ENCODE measurements at regions of chr5 and their contacts with region 1.

Region 1: DNA sequence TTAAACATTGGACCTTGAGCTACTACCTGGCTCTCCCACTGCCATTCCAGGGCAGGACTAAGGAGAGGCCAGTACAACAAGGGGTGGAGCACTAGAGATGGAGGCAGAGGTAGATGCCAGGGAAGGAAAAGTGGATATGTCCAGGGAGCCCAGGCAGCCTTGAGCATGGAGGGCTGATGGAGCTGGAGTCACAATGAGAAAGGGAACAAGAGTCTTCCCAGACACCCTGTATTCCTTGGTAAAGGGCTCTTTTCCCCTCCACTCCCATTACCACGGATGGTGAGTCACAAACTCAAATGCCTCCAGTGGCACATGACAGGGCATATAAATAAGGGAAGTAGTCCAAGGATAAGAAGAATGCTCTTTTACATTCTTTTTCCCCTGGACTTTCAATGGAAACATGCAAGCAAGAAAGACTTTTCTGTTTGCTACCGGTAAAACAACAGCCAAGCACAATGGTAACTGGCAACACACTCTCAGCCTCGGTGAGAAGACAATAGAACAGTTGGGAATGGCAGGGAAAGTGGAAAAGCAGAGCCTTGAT is 16.7 kb downstream of the ERAP1 start:
- DNase-seq: no peak
- CTCF ChIP-seq: no peak

Region 2: DNA sequence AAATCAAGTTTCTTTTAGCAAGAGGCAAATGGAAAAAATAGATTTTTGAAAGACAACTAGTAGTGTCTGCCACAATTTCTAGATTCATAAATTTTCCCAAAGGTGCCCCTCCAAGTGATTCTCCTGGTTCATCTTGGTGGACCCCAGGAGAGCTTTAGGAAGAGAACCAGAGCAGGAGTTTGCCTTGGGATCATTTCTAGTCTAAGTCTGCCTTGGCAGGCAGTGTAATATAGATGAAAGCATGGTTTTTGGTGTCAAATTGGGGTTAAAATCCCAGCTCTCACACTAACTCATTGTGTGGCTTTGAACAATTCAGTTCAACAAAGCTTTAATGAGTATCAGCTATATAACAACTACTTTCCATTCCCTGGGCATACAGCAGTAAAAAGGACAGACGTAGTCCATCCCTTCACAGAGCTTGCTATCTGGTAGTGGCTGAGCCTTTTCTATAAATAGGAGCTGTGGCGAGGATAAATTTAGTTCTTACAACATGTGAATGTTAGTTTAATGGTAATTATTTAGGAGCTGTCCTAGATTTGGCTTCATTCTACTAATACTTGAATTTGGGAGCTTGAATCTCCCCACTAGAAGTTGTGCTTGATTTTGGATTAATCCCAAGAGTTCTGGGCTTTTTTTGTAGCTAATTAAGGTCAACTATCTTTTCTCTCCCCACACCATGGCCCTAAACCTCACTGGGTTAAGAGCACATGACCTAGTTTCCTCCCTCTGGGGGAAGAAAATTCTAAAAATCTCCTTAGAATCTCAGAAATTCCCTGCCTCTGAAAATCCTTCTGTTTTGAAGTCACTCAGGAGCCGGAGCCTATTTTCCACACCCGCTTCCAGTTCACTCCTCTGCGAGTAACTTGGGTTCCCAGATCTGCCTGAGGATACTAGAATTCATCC is 555.8 kb before region 1 on chr5:
- CTCF ChIA-PET with region 1: no interaction called
- POLR2A ChIA-PET with region 1: no interaction called
- DNase-seq: no peak
- CTCF ChIP-seq: no peak

Region 3: DNA sequence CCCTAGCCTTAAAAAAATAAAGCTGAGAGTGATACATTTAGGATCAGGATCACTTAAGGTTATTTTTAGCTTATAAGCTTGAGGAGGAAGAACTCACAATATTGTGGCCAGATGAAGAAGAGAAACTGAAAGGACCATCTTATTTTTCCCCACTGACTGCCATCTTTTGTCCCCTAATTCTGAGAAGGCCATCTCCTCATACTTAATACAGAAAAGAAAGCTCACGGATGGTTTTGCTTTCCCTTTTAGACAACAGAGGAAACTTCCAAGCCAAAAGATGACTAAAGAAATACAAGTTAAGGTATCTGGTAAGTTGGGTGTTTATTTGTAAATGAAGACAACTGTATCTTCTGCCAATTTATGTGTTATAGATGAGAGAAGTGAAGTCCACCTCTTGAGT is 19.6 kb before region 1 on chr5:
- CTCF ChIA-PET with region 1: interaction called, 13 read pairs
- POLR2A ChIA-PET with region 1: no interaction called
- DNase-seq: no peak
- CTCF ChIP-seq: no peak

Region 4: DNA sequence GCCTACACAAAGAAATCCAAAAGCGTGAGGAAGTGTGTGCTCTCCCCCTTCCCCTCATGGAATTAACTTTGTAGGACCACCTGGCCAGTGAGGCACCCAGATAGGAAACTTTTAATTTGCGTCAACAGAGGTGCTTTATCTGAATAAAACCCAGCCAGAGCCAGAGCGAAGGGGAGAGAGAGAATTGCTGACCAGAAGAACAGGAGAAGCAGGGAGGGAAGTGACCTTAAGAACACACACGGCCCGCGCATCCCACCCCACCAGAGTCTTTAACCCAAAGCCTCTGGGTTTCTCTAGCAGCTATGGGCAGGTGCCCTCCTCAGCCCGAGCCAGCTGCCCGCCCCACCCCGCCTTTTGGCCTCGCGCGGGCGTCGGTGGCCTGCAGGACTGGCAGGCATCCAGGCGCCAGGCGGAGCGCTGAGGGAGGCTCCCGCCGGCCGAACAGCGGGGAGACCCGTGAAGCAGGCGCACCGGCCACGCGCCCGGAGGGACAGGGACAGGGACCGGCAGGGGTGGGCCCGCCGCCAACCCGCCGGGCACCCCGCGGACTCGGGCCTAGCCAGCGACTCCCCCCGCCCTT is 16.1 kb after region 1 on chr5:
- CTCF ChIA-PET with region 1: interaction called, 10 read pairs
- POLR2A ChIA-PET with region 1: interaction called, 4 read pairs
- DNase-seq: peak; percentile 66
- CTCF ChIP-seq: no peak

Measured in GM10248 (cell line).